Right ventricle myocardium inferior (tissue), 1 donor: ENCODE measurements at regions of chr16 and their contacts with region 1.

Region 1: GRCh38 chr16:48542020-48542473 is 67.9 kb downstream of the N4BP1 start:
- DNase-seq: no peak
- ATAC-seq: peak; percentile 72

Region 2: DNA sequence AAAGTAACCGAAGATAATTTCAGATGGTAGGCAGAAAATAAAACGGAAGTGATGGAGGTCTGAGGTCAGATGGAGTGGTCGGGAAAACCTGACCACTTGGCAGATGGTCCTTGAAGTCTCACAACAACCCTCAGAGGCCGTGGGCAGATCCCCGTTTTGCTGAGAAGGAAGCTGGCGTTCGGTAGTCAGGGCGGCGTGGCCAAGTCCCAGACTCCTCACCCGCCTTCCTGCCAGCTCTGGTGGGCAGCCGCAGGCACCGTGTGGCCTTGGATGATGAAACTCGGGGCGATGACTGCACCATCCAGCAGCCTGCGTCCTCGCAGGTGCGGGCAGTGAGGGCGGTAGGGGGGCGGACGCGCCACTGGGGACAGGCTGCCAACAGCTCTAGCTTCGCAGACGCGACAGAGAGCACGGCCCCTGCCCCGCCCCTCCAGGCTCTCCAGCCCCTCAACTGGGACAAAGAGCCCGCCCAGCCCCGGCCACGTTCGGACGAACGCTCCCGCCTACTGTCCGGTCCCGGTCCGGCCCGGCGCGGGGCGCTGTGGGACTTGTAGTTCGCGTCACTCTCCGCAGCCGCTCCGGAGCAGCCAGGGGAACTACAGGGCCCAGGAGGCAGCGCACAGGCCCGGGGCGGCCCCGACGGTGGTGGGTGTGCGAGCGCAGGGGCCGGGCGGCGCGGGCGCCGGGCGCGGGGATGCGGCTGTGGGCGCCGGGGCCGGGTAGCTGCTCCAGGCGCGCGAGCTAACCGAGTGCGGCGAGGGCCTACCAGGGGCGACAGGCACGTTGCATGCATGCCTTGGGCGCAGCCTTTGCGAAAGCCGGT is 1658.1 kb before region 1 on chr16 and contains the start of gene GPT2:
- intact Hi-C with region 1: no loop called
- DNase-seq: peak; percentile 99
- ATAC-seq: peak; percentile 99
- total RNA-seq, gene GPT2: 21.9 TPM

Region 3: GRCh38 chr16:48353565-48354163 is 188.4 kb before region 1 on chr16:
- intact Hi-C with region 1: loop called (anchors 2 kb)
- DNase-seq: no peak
- ATAC-seq: peak; percentile 72